ENCODE measurements at regions of chr22 and their contacts with region 1.

Region 1: DNA sequence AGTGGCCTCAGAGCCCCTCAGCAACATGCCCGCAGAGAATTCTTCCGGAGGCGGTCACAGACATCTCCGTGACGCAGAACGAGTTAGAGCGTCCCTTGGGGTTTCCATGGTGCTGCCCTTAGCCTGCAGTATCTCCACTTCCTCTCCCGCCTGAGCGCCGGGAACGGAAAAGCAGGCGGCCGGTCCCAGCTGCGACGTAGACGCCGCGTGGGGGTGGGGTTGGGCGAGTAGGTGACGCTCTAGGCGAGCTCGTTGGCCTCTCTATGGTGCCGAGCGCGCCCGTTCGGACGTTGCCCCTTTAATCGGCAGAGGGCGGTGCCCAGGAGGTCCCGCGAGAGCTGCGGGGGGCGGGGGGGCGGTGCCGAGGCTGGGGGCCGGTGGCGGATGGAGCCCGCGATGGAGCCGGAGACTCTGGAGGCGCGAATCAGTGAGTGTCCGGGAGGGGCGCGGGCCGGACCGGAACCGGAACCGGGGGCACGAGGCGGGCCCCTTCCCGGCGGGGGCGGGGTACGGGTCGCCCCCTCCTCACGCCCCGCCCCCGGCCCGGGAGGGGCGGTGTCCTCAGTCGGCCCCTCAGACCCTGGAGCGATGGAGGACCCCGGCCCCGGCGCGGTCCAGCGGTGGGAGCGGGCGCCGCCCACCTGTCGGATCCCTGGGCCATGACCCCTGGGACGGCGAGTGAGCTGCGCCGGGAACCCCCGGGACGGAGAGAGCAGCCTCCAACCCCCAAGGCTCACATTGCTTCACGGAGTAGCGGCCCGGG is at the start of gene GGA1:
- DNase-seq: peak; percentile 82
- ATAC-seq: peak; percentile 74
- H3K4me3 Mint-ChIP-seq: peak within 1 kb of the TSS; percentile 90
- H3K27ac Mint-ChIP-seq: peak within 1 kb of the TSS; percentile 94
- H3K4me1 Mint-ChIP-seq: peaks cover 41% of the 10 kb centered on the region
- H3K27me3 Mint-ChIP-seq: peaks cover 15% of the 10 kb centered on the region
- CTCF ChIP-seq: no peak
- total RNA-seq, gene GGA1: 102 and 126 TPM in 2 replicates

Region 2: GRCh38 chr22:37486224-37486845 is 122.3 kb before region 1 on chr22 and contains the start of gene MFNG:
- CTCF ChIA-PET with region 1: no interaction called
- POLR2A ChIA-PET with region 1: interaction called, 17 read pairs
- intact Hi-C with region 1: no loop called
- DNase-seq: peak; percentile 73
- ATAC-seq: peak; percentile 79
- H3K4me3 Mint-ChIP-seq: peak within 1 kb of the TSS; percentile 93
- H3K27ac Mint-ChIP-seq: peak within 1 kb of the TSS; percentile 94
- H3K4me1 Mint-ChIP-seq: peaks cover 46% of the 10 kb centered on the region
- H3K27me3 Mint-ChIP-seq: no peaks in the 10 kb centered on the region
- CTCF ChIP-seq: no peak
- total RNA-seq, gene MFNG: 86.1 and 90.6 TPM in 2 replicates

Region 3: DNA sequence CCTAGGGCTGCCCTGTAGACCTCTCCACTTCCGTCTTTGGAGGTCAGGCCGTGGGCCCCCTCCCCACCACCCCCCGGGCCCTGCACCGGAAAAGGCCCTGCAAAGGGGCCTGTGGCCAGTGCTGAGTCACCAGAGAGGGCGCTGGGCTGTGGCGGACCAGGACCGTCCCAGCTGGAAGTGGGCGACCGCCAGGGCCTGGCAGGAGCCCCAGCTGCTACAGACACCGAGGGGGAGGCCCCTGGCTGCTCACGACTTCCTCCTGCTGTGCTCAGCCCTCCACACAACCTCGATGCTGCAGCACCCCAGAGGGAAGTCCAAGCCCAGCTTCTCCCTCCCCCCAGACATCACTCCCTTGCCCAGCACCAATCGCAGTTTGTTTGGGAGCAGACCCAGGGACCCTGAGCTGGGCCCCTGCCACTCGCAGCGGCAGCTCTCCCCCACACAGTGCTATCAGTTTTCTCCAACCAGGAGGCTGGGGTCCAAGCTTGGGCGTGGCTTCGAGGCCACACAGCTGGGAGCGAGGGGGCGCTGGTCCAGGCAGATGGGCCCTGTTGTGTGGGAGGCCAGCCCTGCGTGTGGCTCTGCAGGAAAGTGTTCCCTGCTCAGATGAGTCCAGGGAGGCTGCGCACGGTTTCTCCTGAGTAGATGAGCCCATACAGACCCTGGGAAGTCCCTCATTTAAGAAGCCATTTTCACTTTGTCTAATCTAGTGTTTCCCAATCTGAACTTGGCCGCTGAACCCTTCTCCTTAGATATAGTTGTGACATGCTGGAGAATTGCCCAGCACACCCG is 25.2 kb after region 1 on chr22:
- CTCF ChIA-PET with region 1: interaction called, 26 read pairs
- POLR2A ChIA-PET with region 1: interaction called, 104 read pairs
- intact Hi-C with region 1: loop called (anchors 1 kb)
- DNase-seq: peak; percentile 69
- ATAC-seq: peak; percentile 78
- H3K4me3 Mint-ChIP-seq: peak overlapping the region; percentile 74
- H3K27ac Mint-ChIP-seq: peak overlapping the region; percentile 93
- H3K4me1 Mint-ChIP-seq: peaks cover 67% of the 10 kb centered on the region
- H3K27me3 Mint-ChIP-seq: no peaks in the 10 kb centered on the region
- CTCF ChIP-seq: no peak

Region 4: DNA sequence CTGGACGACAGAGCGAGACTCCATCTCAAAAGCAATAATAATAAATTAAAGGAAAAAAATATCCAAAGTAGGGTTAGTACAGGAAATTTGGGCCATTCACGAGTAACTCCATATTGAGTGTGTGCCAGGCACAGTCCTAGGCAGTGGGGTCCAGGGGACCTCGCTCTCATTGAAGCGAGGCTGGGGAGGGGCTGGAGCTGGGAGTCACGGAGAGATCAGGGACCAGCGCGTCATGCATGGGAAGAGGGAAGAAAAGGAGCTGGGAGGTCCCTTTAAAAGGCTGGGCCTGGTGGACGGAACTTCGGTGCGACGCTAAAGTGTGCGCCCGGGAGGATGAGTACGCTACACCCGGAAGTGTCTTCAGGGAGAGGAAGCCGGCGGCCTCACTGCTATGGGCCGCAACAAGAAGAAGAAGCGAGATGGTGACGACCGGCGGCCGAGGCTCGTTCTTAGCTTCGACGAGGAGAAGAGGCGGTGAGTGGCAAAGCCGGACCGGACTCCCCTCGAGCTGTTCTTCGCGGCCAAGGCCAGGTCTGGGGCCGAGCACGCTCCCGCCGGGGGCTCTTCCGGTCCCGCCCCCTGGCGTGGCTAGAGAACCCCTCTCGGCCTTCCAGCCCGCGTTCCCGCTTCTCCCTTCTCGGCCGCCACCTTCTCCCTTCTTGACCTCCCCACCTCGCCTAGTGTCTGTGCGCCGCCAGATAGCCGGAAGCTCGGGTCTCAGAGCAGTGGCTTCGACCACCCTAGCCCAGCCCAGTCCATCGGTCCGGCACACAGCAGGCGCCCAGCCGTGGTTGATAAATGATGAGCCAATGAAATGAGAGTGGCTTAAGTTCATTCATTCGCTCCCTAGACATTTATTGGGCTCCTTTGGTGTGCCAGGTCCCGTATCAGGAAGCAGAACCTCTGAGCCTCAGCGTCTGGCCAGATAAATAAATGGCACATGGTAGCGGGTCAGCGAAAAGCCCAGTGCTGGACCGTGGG is 77.6 kb after region 1 on chr22 and contains the start of gene NOL12:
- CTCF ChIA-PET with region 1: interaction called, 30 read pairs
- POLR2A ChIA-PET with region 1: interaction called, 26 read pairs
- intact Hi-C with region 1: loop called (anchors 1 kb)
- DNase-seq: peak; percentile 79
- ATAC-seq: peak; percentile 87
- H3K4me3 Mint-ChIP-seq: peak within 1 kb of the TSS; percentile 97
- H3K27ac Mint-ChIP-seq: peak within 1 kb of the TSS; percentile 95
- H3K4me1 Mint-ChIP-seq: peaks cover 35% of the 10 kb centered on the region
- H3K27me3 Mint-ChIP-seq: no peaks in the 10 kb centered on the region
- CTCF ChIP-seq: no peak
- total RNA-seq, gene NOL12: 39.0 and 39.8 TPM in 2 replicates

Region 5: DNA sequence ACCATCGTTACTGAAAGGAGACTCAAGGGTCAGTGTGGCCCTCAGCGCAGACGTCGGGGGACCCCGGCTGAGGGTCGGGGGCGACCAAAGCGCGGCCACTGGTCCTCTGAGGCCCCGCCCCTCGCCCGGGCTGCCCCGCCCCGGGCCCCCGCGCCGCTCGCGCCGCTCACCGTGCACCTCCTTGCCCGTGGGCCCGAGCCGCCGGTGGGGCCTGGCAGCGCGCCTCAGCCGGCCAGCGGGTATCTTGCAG is 235.0 kb after region 1 on chr22:
- CTCF ChIA-PET with region 1: no interaction called
- POLR2A ChIA-PET with region 1: interaction called, 17 read pairs
- intact Hi-C with region 1: loop called (anchors 1 kb)
- DNase-seq: no peak
- ATAC-seq: peak; percentile 23
- H3K4me3 Mint-ChIP-seq: peak overlapping the region; percentile 89
- H3K27ac Mint-ChIP-seq: peak overlapping the region; percentile 85
- H3K4me1 Mint-ChIP-seq: peaks cover 25% of the 10 kb centered on the region
- H3K27me3 Mint-ChIP-seq: no peaks in the 10 kb centered on the region
- CTCF ChIP-seq: no peak

Region 6: GRCh38 chr22:37965940-37966664 is 357.4 kb after region 1 on chr22:
- CTCF ChIA-PET with region 1: interaction called, 3 read pairs
- POLR2A ChIA-PET with region 1: no interaction called
- intact Hi-C with region 1: loop called (anchors 1 kb)
- DNase-seq: no peak
- ATAC-seq: no peak
- H3K4me3 Mint-ChIP-seq: no peak overlapping the region
- H3K27ac Mint-ChIP-seq: no peak overlapping the region
- H3K4me1 Mint-ChIP-seq: no peaks in the 10 kb centered on the region
- H3K27me3 Mint-ChIP-seq: no peaks in the 10 kb centered on the region
- CTCF ChIP-seq: no peak

Measured in activated B cell treated with CpG ODN at 0.5 μM for 24 hours (primary cell).